Activated CD4-positive, alpha-beta T cell treated with anti-CD3 and anti-CD28 coated beads, Interleukin-2, amount 10 ng/mL, durations not matched to agents 24 days and 14 days (primary cell): ENCODE measurements at regions of chr3 and their contacts with region 1.

Region 1: DNA sequence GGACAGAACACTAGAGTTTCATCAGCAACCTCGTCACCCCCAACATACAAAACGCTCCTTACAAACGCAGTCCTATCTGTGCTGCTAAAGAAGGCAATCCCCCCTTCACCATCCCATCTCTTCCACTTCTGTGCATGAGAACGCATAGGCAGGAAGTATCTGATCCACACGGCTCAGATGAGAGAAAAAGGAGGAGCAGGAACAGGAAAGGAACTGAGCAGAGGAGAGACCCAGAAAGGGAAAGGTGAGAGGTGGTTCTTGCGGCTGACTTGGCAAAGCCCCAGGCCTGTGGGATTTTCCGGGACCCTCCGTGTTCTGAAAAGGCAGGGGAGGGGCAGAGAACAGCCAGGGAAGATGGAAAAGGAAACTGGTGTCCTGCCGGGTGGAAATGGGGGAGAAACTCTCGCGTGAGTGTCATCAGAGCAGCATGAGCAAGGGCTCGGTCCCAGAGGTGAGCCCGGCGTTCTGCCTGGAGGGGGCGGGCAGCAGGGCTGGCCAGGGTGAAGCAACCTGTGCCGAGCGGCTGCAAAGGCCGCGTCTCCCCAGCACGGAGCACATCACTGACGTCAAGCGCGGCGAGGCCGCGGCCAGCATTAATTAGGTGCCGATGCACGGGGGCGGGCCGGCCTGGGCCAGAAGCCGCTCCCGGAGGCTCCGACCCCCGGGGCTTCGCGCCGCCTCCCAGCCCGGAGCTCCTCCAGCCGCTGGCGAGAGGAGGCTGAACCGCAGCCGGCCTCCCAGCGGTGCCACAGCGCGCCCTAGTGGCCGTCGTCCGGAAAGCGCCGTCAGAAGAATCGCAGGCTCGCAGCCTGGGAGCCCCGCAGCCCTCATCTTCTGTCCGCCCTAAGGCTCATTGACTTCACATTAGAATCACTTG is 35.8 kb downstream of the CPN2 start:
- DNase-seq: peak; percentile 96
- H3K4me3 Mint-ChIP-seq: peak overlapping the region; percentile 67
- H3K27ac Mint-ChIP-seq: peak overlapping the region; percentile 0
- H3K4me1 Mint-ChIP-seq: peaks cover 40% of the 10 kb centered on the region
- H3K27me3 Mint-ChIP-seq: peaks cover 9% of the 10 kb centered on the region

Region 2: GRCh38 chr3:193665370-193665989 is 649.8 kb before region 1 on chr3:
- intact Hi-C with region 1: loop called (anchors 1 kb)
- DNase-seq: no peak
- H3K4me3 Mint-ChIP-seq: no peak overlapping the region
- H3K27ac Mint-ChIP-seq: no peak overlapping the region
- H3K4me1 Mint-ChIP-seq: peaks cover 3% of the 10 kb centered on the region
- H3K27me3 Mint-ChIP-seq: no peaks in the 10 kb centered on the region

Region 3: GRCh38 chr3:193780810-193781472 is 534.4 kb before region 1 on chr3:
- intact Hi-C with region 1: loop called (anchors 1 kb)
- DNase-seq: peak; percentile 63
- H3K4me3 Mint-ChIP-seq: no peak overlapping the region
- H3K27ac Mint-ChIP-seq: no peak overlapping the region
- H3K4me1 Mint-ChIP-seq: peaks cover 16% of the 10 kb centered on the region
- H3K27me3 Mint-ChIP-seq: peaks cover 43% of the 10 kb centered on the region

Region 4: DNA sequence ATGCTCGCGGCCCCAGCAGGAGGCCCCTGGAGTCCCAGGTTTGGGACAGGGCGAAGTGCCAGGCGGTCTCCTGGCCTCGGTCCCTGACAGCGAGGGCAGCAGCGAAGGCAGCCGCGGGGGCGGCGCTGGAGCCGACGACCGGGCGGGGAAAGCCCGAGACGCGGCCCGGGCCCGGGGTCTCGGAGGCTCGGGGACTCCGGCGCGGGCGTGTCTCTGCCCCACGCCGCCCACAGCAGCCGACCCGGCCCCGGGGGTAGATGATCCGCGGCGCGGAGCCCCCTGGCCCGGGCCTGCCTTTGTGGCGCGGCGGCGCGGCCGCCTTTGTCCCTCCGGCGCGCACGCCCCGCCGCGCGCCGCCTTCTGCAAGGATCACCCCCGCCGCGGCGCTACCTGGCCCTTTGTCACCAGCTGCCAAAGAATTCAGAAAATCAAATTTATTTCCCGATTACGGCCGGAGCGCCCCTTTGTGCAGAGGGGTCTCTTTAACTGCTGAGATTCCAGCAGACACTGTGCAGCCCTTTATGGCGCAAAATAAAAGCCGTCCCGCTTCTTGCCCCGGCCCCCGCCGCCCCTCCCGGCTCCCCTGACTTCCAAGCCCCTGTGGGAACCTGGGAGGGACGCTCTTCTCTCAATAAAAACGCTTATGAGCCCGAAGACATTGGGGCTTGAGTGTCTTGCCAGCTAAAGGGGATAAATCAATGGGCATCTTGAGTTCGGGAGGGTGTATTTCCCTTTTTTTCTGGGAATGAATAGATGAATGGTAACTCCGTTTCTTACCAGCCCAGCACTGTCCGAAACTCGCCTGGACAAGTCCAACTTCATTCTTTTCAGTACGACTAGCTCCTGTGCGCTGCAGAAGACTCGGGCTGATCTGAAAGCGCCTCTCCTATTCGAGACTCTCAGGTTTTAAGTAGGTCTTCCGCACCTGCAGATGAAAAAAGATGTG is 111.0 kb before region 1 on chr3:
- intact Hi-C with region 1: loop called (anchors 5 kb)
- DNase-seq: peak; percentile 78
- H3K4me3 Mint-ChIP-seq: peak overlapping the region; percentile 83
- H3K27ac Mint-ChIP-seq: peak overlapping the region; percentile 45
- H3K4me1 Mint-ChIP-seq: peaks cover 29% of the 10 kb centered on the region
- H3K27me3 Mint-ChIP-seq: peaks cover 17% of the 10 kb centered on the region